H1 (cell line): ENCODE measurements at regions of chr17 and their contacts with region 1.

Region 1: DNA sequence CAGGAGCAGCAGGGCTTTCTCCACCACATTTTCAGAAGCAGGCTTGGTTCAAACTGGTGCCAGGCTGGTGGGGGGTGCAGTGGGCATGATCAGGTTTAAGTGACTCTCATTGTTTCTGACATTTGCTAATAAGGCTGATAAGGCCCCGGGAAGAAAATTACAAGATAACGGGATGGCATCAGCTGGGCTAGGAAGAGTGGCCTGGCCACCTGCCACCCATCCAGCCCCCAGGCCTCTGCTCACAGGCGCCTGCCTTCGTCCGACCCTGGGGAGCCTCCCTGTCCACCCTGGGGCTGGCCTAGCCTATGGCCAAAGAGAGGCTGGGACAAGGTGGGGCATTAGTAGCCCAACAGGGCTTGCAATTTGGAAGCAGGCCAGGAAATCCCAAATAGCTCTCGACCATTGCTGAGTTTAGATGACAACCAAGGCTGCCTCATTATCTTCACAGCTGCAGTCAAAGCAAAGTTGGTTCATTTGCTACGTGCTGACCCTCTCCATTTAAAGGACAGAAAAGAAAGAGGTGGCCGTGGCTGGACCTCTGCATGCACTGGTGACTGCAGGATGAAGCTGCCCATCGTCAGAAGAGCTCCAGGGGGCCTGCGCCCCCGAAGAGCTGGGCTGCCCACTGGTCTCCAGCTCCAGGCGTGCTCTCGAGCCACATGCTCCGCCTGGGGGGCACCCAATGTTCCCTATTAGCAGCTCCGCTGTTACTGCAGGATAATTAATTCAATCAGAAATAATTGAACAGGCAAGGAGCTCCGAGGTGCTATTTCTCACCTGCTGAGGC is 44.9 kb downstream of the PEMT start:
- DNase-seq: no peak
- H3K4me3 ChIP-seq: no peak overlapping the region
- H3K27ac ChIP-seq: no peak overlapping the region
- H3K4me1 ChIP-seq: no peaks in the 10 kb centered on the region; a peak in 1 of 7 replicates
- H3K27me3 ChIP-seq: no peaks in the 10 kb centered on the region
- CTCF ChIP-seq: no peak
- EP300 ChIP-seq: no peak
- POLR2A ChIP-seq: no peak
- RAD21 ChIP-seq: no peak

Region 2: GRCh38 chr17:17467720-17468119 is 78.9 kb before region 1 on chr17:
- CTCF ChIA-PET with region 1: no interaction called
- POLR2A ChIA-PET with region 1: no interaction called
- DNase-seq: no peak
- H3K4me3 ChIP-seq: no peak overlapping the region
- H3K27ac ChIP-seq: no peak overlapping the region
- H3K4me1 ChIP-seq: no peaks in the 10 kb centered on the region
- H3K27me3 ChIP-seq: no peaks in the 10 kb centered on the region; a peak in 2 of 7 replicates
- CTCF ChIP-seq: no peak
- EP300 ChIP-seq: no peak
- POLR2A ChIP-seq: no peak
- RAD21 ChIP-seq: no peak

Region 3: GRCh38 chr17:17561408-17562145 is 15.0 kb after region 1 on chr17:
- CTCF ChIA-PET with region 1: interaction called, 10 read pairs
- POLR2A ChIA-PET with region 1: interaction called, 3 read pairs
- DNase-seq: no peak
- H3K4me3 ChIP-seq: no peak overlapping the region
- H3K27ac ChIP-seq: no peak overlapping the region
- H3K4me1 ChIP-seq: peaks cover 0 to 10% (median 8%) of the 10 kb centered on the region in 4 experiments; a peak in 5 of 7 replicates
- H3K27me3 ChIP-seq: no peaks in the 10 kb centered on the region
- CTCF ChIP-seq: no peak
- EP300 ChIP-seq: no peak
- POLR2A ChIP-seq: no peak
- RAD21 ChIP-seq: no peak